PC-3 (cell line): ENCODE measurements at regions of chr2 and their contacts with region 1.

Region 1: GRCh38 chr2:38750891-38751595 is at the start of gene SRSF7:
- DNase-seq: peak; percentile 99
- ATAC-seq: peak; percentile 71
- H3K4me3 ChIP-seq: peak within 1 kb of the TSS; percentile 98
- H3K27ac ChIP-seq: peak within 1 kb of the TSS; percentile 68
- H3K4me1 ChIP-seq: peaks cover 34% of the 10 kb centered on the region
- H3K27me3 ChIP-seq: no peaks in the 10 kb centered on the region
- CTCF ChIP-seq: no peak
- total RNA-seq, gene SRSF7: 148 and 160 TPM in 2 replicates

Region 2: DNA sequence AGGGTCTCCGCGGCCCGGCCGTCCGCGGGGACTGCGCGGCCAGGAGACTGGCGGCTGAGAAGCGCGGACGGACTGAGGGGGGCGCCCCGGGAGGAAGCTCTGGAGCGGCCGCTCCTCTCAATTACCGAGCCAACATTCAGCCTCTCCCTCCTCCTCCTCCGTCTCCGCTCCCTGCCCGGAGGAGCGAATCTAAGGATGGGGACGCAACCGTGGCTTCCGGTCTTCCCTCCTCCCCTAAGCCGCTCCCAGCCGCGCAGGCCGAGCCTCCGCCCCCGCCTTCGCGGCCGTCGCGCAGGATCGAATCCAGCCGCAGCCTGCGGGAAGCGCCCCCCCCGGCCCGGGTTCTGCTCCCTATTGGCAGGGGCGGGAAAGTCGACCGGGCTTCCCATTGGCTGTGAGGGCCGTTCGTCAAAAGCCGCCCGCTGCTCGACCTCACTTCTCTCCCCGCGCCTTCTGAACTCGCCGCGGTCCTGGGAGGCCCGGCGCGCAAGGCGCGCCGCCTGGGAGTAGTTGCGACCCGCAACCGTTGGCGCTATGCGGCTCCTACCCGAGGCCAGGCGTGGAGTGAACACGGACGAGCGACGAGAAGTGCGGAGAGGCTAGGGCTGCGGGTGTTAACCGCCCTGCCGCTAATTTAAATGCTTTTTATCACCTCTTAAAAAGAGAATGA is 148.2 kb before region 1 on chr2 and contains the start of gene HNRNPLL:
- CTCF ChIA-PET with region 1: interaction called, 5 read pairs
- POLR2A ChIA-PET with region 1: interaction called, 10 read pairs
- intact Hi-C with region 1: no loop called
- DNase-seq: peak; percentile 98
- ATAC-seq: peak; percentile 81
- H3K4me3 ChIP-seq: peak within 1 kb of the TSS; percentile 84
- H3K27ac ChIP-seq: peak within 1 kb of the TSS; percentile 62
- H3K4me1 ChIP-seq: peaks cover 37% of the 10 kb centered on the region
- H3K27me3 ChIP-seq: no peaks in the 10 kb centered on the region
- CTCF ChIP-seq: no peak
- total RNA-seq, gene HNRNPLL: 30.1 and 43.8 TPM in 2 replicates

Region 3: GRCh38 chr2:38766866-38767534 is 16.0 kb after region 1 on chr2:
- CTCF ChIA-PET with region 1: no interaction called
- POLR2A ChIA-PET with region 1: interaction called, 18 read pairs
- intact Hi-C with region 1: no loop called
- DNase-seq: peak; percentile 54
- ATAC-seq: peak; percentile 49
- H3K4me3 ChIP-seq: no peak overlapping the region
- H3K27ac ChIP-seq: peak overlapping the region; percentile 4
- H3K4me1 ChIP-seq: peaks cover 29% of the 10 kb centered on the region
- H3K27me3 ChIP-seq: no peaks in the 10 kb centered on the region
- CTCF ChIP-seq: no peak

Region 4: GRCh38 chr2:39124000-39124745 is 373.1 kb after region 1 on chr2:
- CTCF ChIA-PET with region 1: no interaction called
- POLR2A ChIA-PET with region 1: interaction called, 11 read pairs
- intact Hi-C with region 1: no loop called
- DNase-seq: peak; percentile 98
- ATAC-seq: peak; percentile 73
- H3K4me3 ChIP-seq: peak overlapping the region; percentile 73
- H3K27ac ChIP-seq: peak overlapping the region; percentile 58
- H3K4me1 ChIP-seq: peaks cover 26% of the 10 kb centered on the region
- H3K27me3 ChIP-seq: no peaks in the 10 kb centered on the region
- CTCF ChIP-seq: peak; percentile 61

Region 5: DNA sequence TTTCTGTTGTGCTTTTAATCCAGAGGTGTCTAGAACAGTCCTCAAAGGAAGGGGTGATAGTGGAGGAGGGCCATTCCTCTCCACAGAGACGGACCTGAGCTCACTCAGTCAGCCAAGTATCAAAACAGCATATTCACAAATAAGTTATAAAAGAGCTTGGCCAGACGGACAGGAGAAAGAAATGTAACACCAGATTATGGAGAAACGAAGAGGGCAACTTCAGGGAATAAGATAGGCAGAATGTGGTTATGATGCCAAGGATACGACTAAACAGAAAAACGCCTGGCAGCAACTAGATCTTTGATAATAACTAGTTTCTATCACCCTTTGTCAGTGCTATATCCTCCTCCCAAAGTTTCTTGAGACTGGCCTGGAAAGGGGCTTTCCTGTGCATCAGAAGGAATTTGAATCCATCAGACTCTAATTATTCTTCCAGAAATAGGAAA is 643.5 kb after region 1 on chr2:
- CTCF ChIA-PET with region 1: no interaction called
- POLR2A ChIA-PET with region 1: interaction called, 10 read pairs
- intact Hi-C with region 1: no loop called
- DNase-seq: no peak
- ATAC-seq: no peak
- H3K4me3 ChIP-seq: no peak overlapping the region
- H3K27ac ChIP-seq: no peak overlapping the region
- H3K4me1 ChIP-seq: peaks cover 25% of the 10 kb centered on the region
- H3K27me3 ChIP-seq: no peaks in the 10 kb centered on the region
- CTCF ChIP-seq: no peak